Ascending aorta (tissue), 2 donors: ENCODE measurements at regions of chr3 and their contacts with region 1.

Region 1: GRCh38 chr3:37787153-37787867 is 74.4 kb upstream of the CTDSPL start:
- DNase-seq: peak in 1 of 2 donors; percentile 53
- H3K4me3 ChIP-seq: peak overlapping the region in 1 of 2 donors; percentile 21
- H3K27ac ChIP-seq: peak overlapping the region; percentile 53 to 77
- H3K4me1 ChIP-seq: peaks cover 9 to 44% of the 10 kb centered on the region in 2 donors
- H3K27me3 ChIP-seq: no peaks in the 10 kb centered on the region
- CTCF ChIP-seq: no peak

Region 2: DNA sequence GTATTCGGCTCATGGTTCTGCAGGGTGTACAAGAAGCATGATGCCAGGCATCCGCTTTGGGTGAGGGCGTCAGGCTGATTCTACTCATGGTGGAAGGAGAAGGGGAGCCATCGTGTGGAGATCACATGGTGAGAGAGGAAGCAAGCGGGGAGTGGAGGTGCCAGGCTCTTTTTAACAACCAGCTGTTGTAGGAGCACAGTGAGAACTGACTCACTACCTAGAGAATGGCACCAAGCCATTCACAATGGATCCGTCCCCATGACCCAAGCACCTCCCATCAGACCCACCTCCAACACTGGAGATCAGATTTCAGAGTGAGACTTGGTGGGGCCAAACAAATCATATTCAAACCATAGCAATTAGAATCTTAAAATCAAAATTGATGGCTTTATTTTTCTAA is 185.5 kb before region 1 on chr3:
- intact Hi-C with region 1: loop called (anchors 5 kb)
- DNase-seq: peak; percentile 28 to 80
- H3K4me3 ChIP-seq: no peak overlapping the region
- H3K27ac ChIP-seq: peak overlapping the region; percentile 91 to 92
- H3K4me1 ChIP-seq: peaks cover 8 to 53% of the 10 kb centered on the region in 2 donors
- H3K27me3 ChIP-seq: no peaks in the 10 kb centered on the region
- CTCF ChIP-seq: no peak

Region 3: GRCh38 chr3:37814547-37814946 is 27.2 kb after region 1 on chr3:
- intact Hi-C with region 1: loop called (anchors 2 kb)
- DNase-seq: no peak
- H3K4me3 ChIP-seq: no peak overlapping the region
- H3K27ac ChIP-seq: peak overlapping the region; percentile 12 to 84
- H3K4me1 ChIP-seq: peaks cover 13 to 43% of the 10 kb centered on the region in 2 donors
- H3K27me3 ChIP-seq: no peaks in the 10 kb centered on the region
- CTCF ChIP-seq: peak in 2 of 3 experiments; percentile 22 to 49